ENCODE measurements at regions of chr17 and their contacts with region 1.

Region 1: DNA sequence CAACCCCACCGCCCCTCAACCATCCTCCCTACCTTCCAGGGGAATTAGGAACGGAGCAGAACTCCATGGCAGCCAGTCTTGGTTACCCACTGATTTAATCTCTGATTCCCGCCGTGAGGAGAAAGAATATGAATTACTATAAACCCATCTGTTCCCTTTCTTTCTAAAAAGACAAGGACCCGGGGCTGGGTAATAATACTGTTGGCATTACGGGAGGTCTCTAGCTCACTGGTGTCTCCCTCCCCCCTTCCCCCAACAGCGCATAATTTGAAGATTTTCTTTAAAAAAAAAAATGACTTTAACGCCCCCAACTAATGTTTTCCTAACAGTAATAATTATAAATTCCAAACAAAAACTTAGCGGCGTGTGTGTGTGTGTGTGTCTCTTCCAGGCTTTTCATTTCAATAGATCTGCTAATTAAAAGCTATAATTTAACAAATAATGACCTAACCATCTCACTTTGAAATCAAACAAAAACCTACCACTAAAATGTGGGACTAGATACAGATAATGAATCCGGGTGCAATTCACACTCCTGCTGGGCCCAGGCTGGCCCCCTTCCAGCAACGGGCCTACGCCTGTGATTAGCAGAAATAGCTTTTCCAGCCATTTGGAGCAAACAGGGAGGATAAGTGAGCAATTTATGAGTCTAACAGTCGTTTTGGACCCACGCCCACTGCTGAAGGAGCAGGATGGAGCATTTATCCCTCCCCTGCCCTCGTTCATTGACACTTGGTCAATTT is 18.2 kb upstream of the BHLHA9 start:
- DNase-seq: no peak
- H3K4me3 ChIP-seq: no peak overlapping the region
- H3K27ac ChIP-seq: no peak overlapping the region
- H3K4me1 ChIP-seq: no peaks in the 10 kb centered on the region
- H3K27me3 ChIP-seq: no peaks in the 10 kb centered on the region
- CTCF ChIP-seq: no peak

Region 2: GRCh38 chr17:1474402-1475189 is 222.6 kb after region 1 on chr17:
- CTCF ChIA-PET with region 1: no interaction called
- dilution Hi-C with region 1: loop called (anchors 10 kb)
- in situ Hi-C with region 1: no loop called
- intact Hi-C with region 1: no loop called
- DNase-seq: no peak
- H3K4me3 ChIP-seq: no peak overlapping the region
- H3K27ac ChIP-seq: no peak overlapping the region
- H3K4me1 ChIP-seq: no peaks in the 10 kb centered on the region
- H3K27me3 ChIP-seq: no peaks in the 10 kb centered on the region
- CTCF ChIP-seq: no peak

Measured in mammary epithelial cell (primary cell).